Right ventricle myocardium superior (tissue), 1 donor: ENCODE measurements at regions of chr2 and their contacts with region 1.

Region 1: GRCh38 chr2:41414486-41415230 is 633.2 kb upstream of the PKDCC start:
- DNase-seq: peak; percentile 17
- ATAC-seq: peak; percentile 55

Region 2: DNA sequence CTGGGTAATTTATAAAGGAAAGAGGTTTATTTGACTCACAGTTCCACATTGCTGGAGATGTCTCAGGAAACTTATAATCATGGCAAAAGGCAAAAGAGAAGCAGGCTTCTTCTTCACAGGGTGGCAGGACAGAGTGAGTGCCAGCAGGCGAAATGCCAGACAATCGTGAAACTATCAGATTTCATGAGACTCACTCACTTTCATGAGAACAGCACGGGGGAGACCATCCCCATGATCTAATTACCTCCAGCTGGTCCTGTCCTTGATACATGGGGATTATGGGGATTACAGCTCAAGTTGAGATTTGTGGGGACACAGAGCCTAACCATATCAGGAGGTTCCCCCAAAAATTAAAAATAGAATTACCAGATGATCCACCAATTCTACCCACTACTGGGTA is 287.3 kb before region 1 on chr2:
- intact Hi-C with region 1: no loop called
- DNase-seq: no peak
- ATAC-seq: no peak

Region 3: GRCh38 chr2:41698678-41699422 is 284.2 kb after region 1 on chr2:
- intact Hi-C with region 1: loop called (anchors 5 kb)
- DNase-seq: peak; percentile 60
- ATAC-seq: peak; percentile 80

Region 4: GRCh38 chr2:41782306-41783158 is 367.9 kb after region 1 on chr2:
- intact Hi-C with region 1: loop called (anchors 10 kb)
- DNase-seq: no peak
- ATAC-seq: peak; percentile 39